H1 (cell line): ENCODE measurements at regions of chr13 and their contacts with region 1.

Region 1: DNA sequence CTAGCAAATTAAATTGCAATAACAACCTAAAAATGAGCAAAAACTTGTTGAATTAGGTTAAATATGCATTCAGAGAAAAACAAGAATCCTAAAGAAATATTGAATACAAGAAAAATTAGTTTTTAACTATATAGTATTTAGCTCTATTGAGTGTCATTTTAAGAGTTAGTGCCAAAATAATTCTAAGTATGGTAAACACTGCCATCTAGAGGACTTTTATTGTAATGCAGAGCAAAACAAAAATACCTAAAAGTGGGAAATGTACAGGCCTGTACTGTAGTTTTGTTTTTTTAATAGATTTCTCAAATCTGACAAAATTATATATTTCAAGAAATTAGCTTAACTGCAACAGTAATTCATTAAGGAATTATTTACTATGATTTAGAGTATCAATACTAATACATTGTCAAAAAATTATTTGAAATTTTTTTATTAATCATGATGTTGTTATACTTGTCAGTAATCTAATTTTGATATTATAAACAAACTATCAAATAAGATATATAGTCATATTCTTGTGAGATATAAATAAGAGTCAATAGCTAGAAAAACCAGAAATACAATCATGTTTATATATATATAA is 8.2 kb upstream of the PCDH9 start:
- DNase-seq: no peak
- H3K4me3 ChIP-seq: no peak overlapping the region
- H3K27ac ChIP-seq: no peak overlapping the region
- H3K4me1 ChIP-seq: no peaks in the 10 kb centered on the region
- H3K27me3 ChIP-seq: no peaks in the 10 kb centered on the region
- CTCF ChIP-seq: peak in 2 of 3 experiments; percentile 24 to 31; a peak in 2 of 4 replicates
- EP300 ChIP-seq: no peak
- POLR2A ChIP-seq: no peak
- RAD21 ChIP-seq: peak in 1 of 2 experiments; percentile 58; a peak in 3 of 4 replicates

Region 2: GRCh38 chr13:67273001-67273400 is 34.6 kb after region 1 on chr13:
- CTCF ChIA-PET with region 1: interaction called, 10 read pairs
- POLR2A ChIA-PET with region 1: no interaction called
- DNase-seq: no peak
- H3K4me3 ChIP-seq: no peak overlapping the region
- H3K27ac ChIP-seq: no peak overlapping the region
- H3K4me1 ChIP-seq: peaks cover 0 to 5% (median 0%) of the 10 kb centered on the region in 4 experiments; a peak in 1 of 7 replicates
- H3K27me3 ChIP-seq: no peaks in the 10 kb centered on the region
- CTCF ChIP-seq: no peak
- EP300 ChIP-seq: no peak
- POLR2A ChIP-seq: no peak
- RAD21 ChIP-seq: no peak

Region 3: DNA sequence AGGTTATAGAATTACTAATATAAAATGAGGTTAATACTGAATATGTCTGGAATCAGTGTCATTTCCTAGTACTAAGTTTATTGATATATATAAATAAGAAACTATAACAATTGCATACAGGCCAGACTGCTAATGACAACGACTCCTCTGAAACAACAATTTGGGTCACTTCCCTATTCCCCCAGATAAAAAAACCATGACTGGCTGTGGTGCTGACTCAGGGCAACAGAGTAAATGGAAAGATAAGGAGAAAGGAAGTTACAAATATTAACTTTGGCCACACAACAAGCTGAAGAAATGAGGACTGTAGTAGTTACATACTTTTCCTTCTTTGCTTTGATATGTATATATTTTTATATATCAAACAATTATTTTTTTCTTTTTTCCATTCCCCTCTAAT is 255.5 kb after region 1 on chr13:
- CTCF ChIA-PET with region 1: no interaction called
- POLR2A ChIA-PET with region 1: no interaction called
- DNase-seq: no peak
- H3K4me3 ChIP-seq: no peak overlapping the region
- H3K27ac ChIP-seq: no peak overlapping the region
- H3K4me1 ChIP-seq: no peaks in the 10 kb centered on the region
- H3K27me3 ChIP-seq: no peaks in the 10 kb centered on the region
- CTCF ChIP-seq: no peak
- EP300 ChIP-seq: no peak
- POLR2A ChIP-seq: no peak
- RAD21 ChIP-seq: no peak